Thyroid gland (tissue), 4 donors: ENCODE measurements at regions of chr2 and their contacts with region 1.

Region 1: DNA sequence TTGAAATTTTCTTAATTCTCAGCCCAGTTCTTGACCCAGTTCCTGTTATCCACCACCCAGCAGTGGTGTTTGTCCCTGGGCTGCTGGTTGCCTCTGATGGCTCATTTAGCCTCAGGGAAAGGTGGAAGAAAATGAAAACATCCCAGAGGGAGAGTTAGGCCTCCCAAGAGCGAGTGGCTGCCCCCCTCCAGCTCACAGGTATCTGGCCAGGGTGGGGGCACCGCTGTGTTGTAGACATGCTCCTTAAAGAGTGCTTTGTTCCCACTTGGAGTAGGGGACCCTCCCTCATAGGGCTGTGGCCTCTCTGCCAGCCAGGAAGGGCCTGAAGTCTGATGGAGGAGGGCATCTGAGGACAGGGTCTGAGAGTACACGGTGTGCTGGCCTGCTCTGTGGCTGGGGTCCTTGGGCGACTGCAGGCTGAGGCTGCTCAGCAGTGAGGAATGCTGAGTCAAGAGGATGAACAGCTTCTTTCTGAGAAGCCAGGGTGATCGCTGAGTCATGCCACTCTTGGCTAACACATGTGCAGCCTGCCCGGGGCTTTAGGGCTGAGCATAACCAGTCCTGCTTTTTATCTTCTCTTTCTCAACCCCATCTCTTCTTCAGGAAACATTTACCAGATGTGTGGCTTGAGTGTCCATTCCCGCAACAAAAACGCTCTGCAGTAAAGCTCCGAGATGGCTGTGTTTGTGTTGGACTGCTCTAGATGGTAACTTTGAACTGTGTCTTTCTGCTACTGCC is 72.3 kb downstream of the IL1R2 start:
- DNase-seq: peak; percentile 92 to 94
- H3K4me3 ChIP-seq: no peak overlapping the region
- H3K27ac ChIP-seq: peak overlapping the region; percentile 83 to 96 (median 87)
- H3K4me1 ChIP-seq: peaks cover 24 to 61% of the 10 kb centered on the region in 2 donors
- H3K27me3 ChIP-seq: no peaks in the 10 kb centered on the region
- CTCF ChIP-seq: no peak
- POLR2A ChIP-seq: no peak

Region 2: DNA sequence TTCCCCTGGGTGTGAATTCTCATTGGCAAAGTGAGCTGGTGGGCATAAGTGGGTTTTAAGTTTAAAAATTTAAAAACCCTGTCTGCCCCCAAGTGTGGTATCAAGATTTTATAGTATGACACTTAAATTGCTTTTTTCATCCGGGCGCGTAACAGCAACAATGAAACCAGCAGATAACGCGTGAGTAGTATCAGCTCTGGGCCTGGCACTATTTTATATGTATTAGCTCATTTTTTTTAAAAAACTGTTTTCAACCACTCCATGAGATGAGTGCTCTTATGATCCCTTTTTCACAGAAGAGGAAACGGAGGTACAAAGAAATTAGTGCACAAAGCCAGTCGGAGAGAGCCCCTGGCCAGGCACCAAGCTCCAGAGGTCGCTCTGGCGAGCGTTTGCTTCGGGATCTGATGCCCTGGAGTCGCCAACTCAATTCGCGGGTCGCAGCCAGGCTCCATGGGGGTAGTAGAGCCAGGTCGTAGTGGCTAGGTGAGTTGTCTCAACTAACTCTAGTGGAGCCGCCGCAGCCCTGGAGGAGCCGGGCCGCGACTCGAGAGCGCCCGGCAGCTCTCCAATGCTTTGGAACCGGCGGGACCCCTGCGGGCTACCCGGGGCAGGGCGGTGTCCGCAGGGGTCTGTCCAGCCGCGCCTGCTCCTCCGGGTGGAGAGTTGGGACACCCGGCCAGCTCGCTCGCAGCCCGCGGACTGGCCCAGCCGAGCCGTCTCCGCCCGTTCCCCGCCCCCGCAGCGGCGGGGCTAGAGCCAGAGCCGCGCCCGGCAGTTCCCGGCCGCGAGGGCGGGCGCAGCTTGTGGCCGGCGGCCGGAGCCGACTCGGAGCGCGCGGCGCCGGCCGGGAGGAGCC is 78.1 kb after region 1 on chr2 and contains the start of gene IL1R1:
- intact Hi-C with region 1: loop called (anchors 10 kb)
- DNase-seq: peak; percentile 84 to 87
- H3K4me3 ChIP-seq: peak within 1 kb of the TSS; percentile 68 to 84 (median 75)
- H3K27ac ChIP-seq: peak within 1 kb of the TSS; percentile 94 to 97 (median 95)
- H3K4me1 ChIP-seq: peaks cover 23 to 28% of the 10 kb centered on the region in 2 donors
- H3K27me3 ChIP-seq: no peaks in the 10 kb centered on the region
- CTCF ChIP-seq: no peak
- POLR2A ChIP-seq: peak; percentile 31 to 88
- total RNA-seq, gene IL1R1: 57.6 to 220 (median 103) TPM